ENCODE measurements at regions of chr3 and their contacts with region 1.

Region 1: DNA sequence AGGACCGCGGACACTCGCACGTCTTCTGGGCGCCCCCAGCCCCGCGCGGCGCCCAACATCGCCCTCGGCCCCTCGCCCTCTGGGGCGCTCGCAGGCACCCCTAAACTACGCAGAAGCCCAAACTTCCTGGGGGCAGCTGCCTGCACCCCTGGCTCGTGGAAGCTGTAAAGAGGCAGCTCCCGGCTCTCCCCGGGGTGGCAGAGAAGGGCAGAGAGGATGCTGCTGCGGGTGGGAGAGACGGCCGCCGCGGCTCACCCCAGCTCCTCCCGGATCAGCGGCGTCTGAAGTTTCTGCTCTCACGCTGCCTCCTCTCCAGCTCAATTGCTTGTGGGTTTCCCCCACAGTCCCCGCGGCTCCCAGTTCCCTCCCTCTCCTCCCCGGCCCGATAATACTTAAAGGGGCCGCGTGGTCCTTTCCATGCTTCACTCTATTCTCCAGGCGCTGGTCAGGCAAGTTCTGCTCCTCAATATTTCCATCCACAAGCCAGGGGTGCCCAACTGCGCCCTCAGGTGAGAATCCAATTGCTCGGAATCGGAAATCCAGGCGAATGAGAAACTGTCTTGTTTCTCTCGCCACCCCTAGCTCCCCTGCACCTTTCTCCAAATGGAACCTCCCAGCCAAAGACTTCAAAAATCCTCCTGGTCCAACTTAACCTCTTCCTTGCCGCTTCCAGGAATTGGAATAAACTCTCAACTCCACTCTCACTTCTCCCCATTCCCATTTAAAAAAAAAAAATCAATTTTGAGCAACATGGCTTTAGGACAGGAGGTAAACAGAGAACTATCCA is 748.5 kb downstream of the ROBO1 start:
- DNase-seq: peak; percentile 95
- H3K4me3 Mint-ChIP-seq: no peak overlapping the region
- H3K27ac Mint-ChIP-seq: peak overlapping the region; percentile 85
- H3K4me1 Mint-ChIP-seq: peaks cover 6% of the 10 kb centered on the region
- H3K27me3 Mint-ChIP-seq: no peaks in the 10 kb centered on the region
- CTCF ChIP-seq: no peak

Region 2: DNA sequence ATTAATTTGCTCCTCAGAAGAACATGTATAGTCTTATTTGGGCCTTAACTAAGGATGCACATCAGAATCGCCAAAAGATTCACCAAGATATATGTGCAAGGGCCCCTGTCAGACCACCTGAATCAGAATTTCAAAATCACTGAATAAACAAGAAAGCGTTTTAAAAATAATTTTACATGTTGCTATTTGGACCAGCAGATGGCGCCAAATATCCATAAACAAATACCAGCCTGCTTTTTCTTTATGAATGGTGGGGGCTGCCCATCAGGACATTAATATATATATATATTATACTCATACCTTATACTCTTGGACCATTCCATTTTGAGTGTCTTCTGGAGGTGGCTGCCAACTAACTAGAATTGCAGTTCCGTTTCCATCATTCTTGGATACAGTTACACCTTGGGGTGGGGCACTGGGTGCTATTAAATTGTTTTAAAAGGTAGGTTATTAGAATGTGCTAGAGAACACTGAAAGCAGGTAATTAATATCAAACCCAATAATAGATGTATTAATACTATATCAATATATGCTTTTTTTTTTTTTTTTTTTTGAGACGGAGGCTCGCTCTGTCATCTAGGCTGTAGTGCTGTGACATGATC is 359.8 kb before region 1 on chr3:
- CTCF ChIA-PET with region 1: interaction called, 10 read pairs
- POLR2A ChIA-PET with region 1: interaction called, 13 read pairs
- intact Hi-C with region 1: no loop called
- DNase-seq: peak; percentile 57
- H3K4me3 Mint-ChIP-seq: no peak overlapping the region
- H3K27ac Mint-ChIP-seq: no peak overlapping the region
- H3K4me1 Mint-ChIP-seq: no peaks in the 10 kb centered on the region
- H3K27me3 Mint-ChIP-seq: no peaks in the 10 kb centered on the region
- CTCF ChIP-seq: peak; percentile 63

Region 3: DNA sequence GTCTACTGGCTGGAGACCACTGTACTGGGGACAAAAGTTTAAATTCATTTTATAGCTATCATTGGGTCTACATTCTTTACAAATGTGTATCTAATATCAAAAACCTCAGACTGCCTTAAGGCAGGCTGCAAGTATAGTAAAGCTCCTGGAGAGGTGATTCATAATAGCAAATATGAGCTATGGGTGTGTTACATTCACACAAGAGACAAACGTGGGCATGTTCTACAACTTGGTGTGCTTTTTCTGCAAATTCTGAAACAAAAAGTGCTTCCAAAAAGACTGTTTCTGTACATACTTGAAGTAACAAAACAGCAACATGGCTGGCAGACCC is 352.9 kb before region 1 on chr3:
- CTCF ChIA-PET with region 1: interaction called, 4 read pairs
- POLR2A ChIA-PET with region 1: interaction called, 23 read pairs
- intact Hi-C with region 1: no loop called
- DNase-seq: peak; percentile 53
- H3K4me3 Mint-ChIP-seq: peak overlapping the region; percentile 38
- H3K27ac Mint-ChIP-seq: peak overlapping the region; percentile 79
- H3K4me1 Mint-ChIP-seq: peaks cover 11% of the 10 kb centered on the region
- H3K27me3 Mint-ChIP-seq: no peaks in the 10 kb centered on the region
- CTCF ChIP-seq: no peak

Region 4: GRCh38 chr3:78728406-78729145 is 290.8 kb before region 1 on chr3:
- CTCF ChIA-PET with region 1: no interaction called
- POLR2A ChIA-PET with region 1: interaction called, 10 read pairs
- intact Hi-C with region 1: no loop called
- DNase-seq: peak; percentile 61
- H3K4me3 Mint-ChIP-seq: no peak overlapping the region
- H3K27ac Mint-ChIP-seq: no peak overlapping the region
- H3K4me1 Mint-ChIP-seq: peaks cover 14% of the 10 kb centered on the region
- H3K27me3 Mint-ChIP-seq: no peaks in the 10 kb centered on the region
- CTCF ChIP-seq: no peak

Region 5: DNA sequence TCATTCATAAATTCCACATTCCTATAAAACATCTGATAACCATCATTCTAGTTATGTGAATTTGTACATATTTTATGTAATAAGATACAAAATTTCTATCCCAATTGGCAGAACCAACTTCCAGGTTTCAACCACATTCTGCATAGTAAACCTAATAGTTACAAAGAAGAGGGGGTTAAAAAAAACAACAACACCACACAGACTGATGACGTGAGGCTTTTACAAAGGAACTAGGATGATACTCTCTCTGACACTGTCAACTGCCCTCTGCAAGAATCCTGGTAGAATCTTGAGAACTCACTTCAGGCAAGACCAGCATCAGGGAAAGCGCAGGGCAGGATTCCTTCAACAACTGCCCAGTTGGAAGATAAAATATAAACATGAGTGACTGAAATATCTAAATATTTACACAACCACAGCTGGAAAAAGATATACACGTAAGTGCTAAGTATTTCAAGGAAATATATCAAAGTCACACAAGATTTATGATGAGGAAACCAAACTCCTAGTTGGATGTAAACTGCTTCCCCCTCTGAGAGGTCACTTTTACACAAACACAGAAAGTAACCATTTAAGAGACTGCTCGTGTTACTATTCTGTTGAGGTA is 67.9 kb before region 1 on chr3:
- CTCF ChIA-PET with region 1: no interaction called
- POLR2A ChIA-PET with region 1: no interaction called
- intact Hi-C with region 1: no loop called
- DNase-seq: no peak
- H3K4me3 Mint-ChIP-seq: no peak overlapping the region
- H3K27ac Mint-ChIP-seq: no peak overlapping the region
- H3K4me1 Mint-ChIP-seq: no peaks in the 10 kb centered on the region
- H3K27me3 Mint-ChIP-seq: no peaks in the 10 kb centered on the region
- CTCF ChIP-seq: no peak

Region 6: GRCh38 chr3:79005084-79005483 is 14.2 kb before region 1 on chr3:
- CTCF ChIA-PET with region 1: interaction called, 10 read pairs
- POLR2A ChIA-PET with region 1: interaction called, 41 read pairs
- intact Hi-C with region 1: no loop called
- DNase-seq: peak; percentile 14
- H3K4me3 Mint-ChIP-seq: no peak overlapping the region
- H3K27ac Mint-ChIP-seq: no peak overlapping the region
- H3K4me1 Mint-ChIP-seq: peaks cover 17% of the 10 kb centered on the region
- H3K27me3 Mint-ChIP-seq: no peaks in the 10 kb centered on the region
- CTCF ChIP-seq: no peak

Region 7: DNA sequence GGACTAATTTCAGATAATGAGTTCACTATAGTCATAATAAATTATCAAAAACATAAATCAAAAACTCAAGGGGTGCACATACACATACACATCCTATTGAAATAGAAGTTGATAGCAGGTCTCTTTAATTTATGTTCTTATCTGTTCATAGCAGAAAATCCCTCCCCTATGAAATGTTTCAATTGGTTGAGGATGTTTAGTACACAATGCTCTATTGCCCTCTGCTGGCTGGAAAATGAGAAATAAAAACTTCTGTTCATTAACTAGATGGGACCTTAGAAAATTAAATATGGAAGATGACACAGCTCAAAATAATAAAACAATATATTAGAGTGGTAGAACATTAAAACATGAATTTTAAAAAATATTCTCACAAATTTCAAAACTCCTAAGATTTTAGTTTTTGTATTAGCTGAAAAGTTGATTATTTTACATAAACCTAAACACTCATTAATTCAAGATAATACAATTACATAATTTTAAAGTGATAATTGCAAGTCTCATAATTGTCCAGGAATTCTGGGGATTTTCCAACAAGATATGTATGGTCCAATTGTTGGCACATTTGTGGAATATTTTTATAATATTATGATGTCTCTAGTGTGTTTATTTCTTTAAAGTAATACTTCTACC is 13.5 kb after region 1 on chr3:
- CTCF ChIA-PET with region 1: interaction called, 17 read pairs
- POLR2A ChIA-PET with region 1: interaction called, 17 read pairs
- intact Hi-C with region 1: no loop called
- DNase-seq: peak; percentile 66
- H3K4me3 Mint-ChIP-seq: no peak overlapping the region
- H3K27ac Mint-ChIP-seq: no peak overlapping the region
- H3K4me1 Mint-ChIP-seq: no peaks in the 10 kb centered on the region
- H3K27me3 Mint-ChIP-seq: no peaks in the 10 kb centered on the region
- CTCF ChIP-seq: peak; percentile 53